ENCODE measurements at regions of chr16 and their contacts with region 1.

Region 1: GRCh38 chr16:30370444-30371247 is at the start of gene TBC1D10B:
- DNase-seq: peak; percentile 98 to 99
- H3K4me3 ChIP-seq: peak within 1 kb of the TSS; percentile 63
- H3K4me3 Mint-ChIP-seq: peak within 1 kb of the TSS; percentile 83
- H3K27ac Mint-ChIP-seq: peak within 1 kb of the TSS; percentile 99
- H3K4me1 ChIP-seq: peaks cover 21% of the 10 kb centered on the region
- H3K4me1 Mint-ChIP-seq: peaks cover 33% of the 10 kb centered on the region
- H3K27me3 ChIP-seq: no peaks in the 10 kb centered on the region
- H3K27me3 Mint-ChIP-seq: no peaks in the 10 kb centered on the region
- CTCF ChIP-seq: peak; percentile 17 to 40
- total RNA-seq, gene TBC1D10B: 36.9 and 40.5 TPM in 2 replicates

Region 2: GRCh38 chr16:30183233-30184095 is 187.2 kb before region 1 on chr16 and contains the start of gene CORO1A:
- CTCF ChIA-PET with region 1: no interaction called
- POLR2A ChIA-PET with region 1: no interaction called
- intact Hi-C with region 1: no loop called
- DNase-seq: peak; percentile 64 to 78
- H3K4me3 ChIP-seq: peak within 1 kb of the TSS; percentile 68
- H3K4me3 Mint-ChIP-seq: peak within 1 kb of the TSS; percentile 80
- H3K27ac Mint-ChIP-seq: no peak within 1 kb of the TSS
- H3K4me1 ChIP-seq: no peaks in the 10 kb centered on the region
- H3K4me1 Mint-ChIP-seq: no peaks in the 10 kb centered on the region
- H3K27me3 ChIP-seq: no peaks in the 10 kb centered on the region
- H3K27me3 Mint-ChIP-seq: no peaks in the 10 kb centered on the region
- CTCF ChIP-seq: no peak
- total RNA-seq, gene CORO1A: 0.95 and 1.2 TPM in 2 replicates

Region 3: DNA sequence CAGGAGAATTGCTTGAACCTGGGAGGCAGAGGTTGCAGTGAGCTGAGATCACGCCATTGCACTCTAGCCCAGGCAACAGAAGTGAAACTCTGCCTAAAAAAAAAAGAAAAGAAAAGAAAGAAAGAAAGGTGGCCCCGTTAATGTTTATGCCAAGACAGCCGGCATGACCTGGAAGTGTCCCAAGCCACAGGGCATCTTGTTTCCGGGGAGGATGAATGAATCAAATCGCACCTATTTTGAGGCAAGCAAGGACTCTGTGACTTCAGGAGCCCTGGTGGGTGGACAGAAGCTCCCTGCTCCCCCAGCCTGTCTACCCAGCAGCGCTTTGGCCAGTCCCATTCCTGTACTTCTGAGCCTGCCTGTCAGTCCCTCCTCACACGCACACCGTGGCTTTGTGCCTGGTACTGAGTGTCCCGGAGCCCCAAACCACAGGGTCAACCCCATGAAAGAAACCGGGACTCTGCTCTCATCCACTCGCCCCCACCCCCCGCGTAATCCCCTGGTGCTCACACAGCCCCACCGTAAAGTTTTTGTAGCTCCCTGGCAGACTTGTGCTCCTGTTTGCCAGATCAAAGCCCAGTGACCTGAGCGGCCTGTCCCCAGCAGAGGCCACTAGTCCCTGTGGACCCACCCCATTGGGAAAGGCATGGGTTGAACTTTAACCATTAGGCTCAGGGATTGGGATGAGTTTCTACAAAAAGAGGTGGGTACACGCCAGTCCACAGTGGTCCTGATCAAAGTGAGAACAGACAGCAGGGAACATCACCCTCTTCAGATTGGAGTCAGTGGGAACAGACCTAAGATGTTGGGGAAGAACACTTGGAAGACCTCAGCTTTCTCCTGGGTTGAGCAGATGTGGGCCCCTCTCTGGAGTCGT is 34.8 kb before region 1 on chr16:
- CTCF ChIA-PET with region 1: interaction called, 4 read pairs
- POLR2A ChIA-PET with region 1: interaction called, 15 read pairs
- intact Hi-C with region 1: no loop called
- DNase-seq: peak in 1 of 2 experiments; percentile 48
- H3K4me3 ChIP-seq: peak overlapping the region; percentile 46
- H3K4me3 Mint-ChIP-seq: peak overlapping the region; percentile 93
- H3K27ac Mint-ChIP-seq: peak overlapping the region; percentile 94
- H3K4me1 ChIP-seq: no peaks in the 10 kb centered on the region
- H3K4me1 Mint-ChIP-seq: peaks cover 8% of the 10 kb centered on the region
- H3K27me3 ChIP-seq: no peaks in the 10 kb centered on the region
- H3K27me3 Mint-ChIP-seq: no peaks in the 10 kb centered on the region
- CTCF ChIP-seq: peak in 1 of 2 experiments; percentile 26

Region 4: GRCh38 chr16:30355144-30355894 is 15.3 kb before region 1 on chr16 and contains the start of gene CD2BP2:
- CTCF ChIA-PET with region 1: interaction called, 5 read pairs
- POLR2A ChIA-PET with region 1: interaction called, 30 read pairs
- intact Hi-C with region 1: no loop called
- DNase-seq: peak; percentile 93 to 97
- H3K4me3 ChIP-seq: peak within 1 kb of the TSS; percentile 97
- H3K4me3 Mint-ChIP-seq: peak within 1 kb of the TSS; percentile 94
- H3K27ac Mint-ChIP-seq: peak within 1 kb of the TSS; percentile 99
- H3K4me1 ChIP-seq: peaks cover 5% of the 10 kb centered on the region; the same call in 1 of the 2 replicates
- H3K4me1 Mint-ChIP-seq: peaks cover 18% of the 10 kb centered on the region
- H3K27me3 ChIP-seq: no peaks in the 10 kb centered on the region
- H3K27me3 Mint-ChIP-seq: no peaks in the 10 kb centered on the region
- CTCF ChIP-seq: no peak
- total RNA-seq, gene CD2BP2: 50.1 and 51.8 TPM in 2 replicates

Region 5: GRCh38 chr16:30407102-30407803 is 36.6 kb after region 1 on chr16 and contains the start of gene ZNF771:
- CTCF ChIA-PET with region 1: interaction called, 18 read pairs
- POLR2A ChIA-PET with region 1: interaction called, 7 read pairs
- intact Hi-C with region 1: no loop called
- DNase-seq: peak; percentile 89 to 92
- H3K4me3 ChIP-seq: peak within 1 kb of the TSS; percentile 87
- H3K4me3 Mint-ChIP-seq: peak within 1 kb of the TSS; percentile 87
- H3K27ac Mint-ChIP-seq: peak within 1 kb of the TSS; percentile 94
- H3K4me1 ChIP-seq: peaks cover 15% of the 10 kb centered on the region
- H3K4me1 Mint-ChIP-seq: peaks cover 7% of the 10 kb centered on the region
- H3K27me3 ChIP-seq: no peaks in the 10 kb centered on the region
- H3K27me3 Mint-ChIP-seq: no peaks in the 10 kb centered on the region
- CTCF ChIP-seq: no peak
- total RNA-seq, gene ZNF771: 4.7 and 5.8 TPM in 2 replicates

Region 6: DNA sequence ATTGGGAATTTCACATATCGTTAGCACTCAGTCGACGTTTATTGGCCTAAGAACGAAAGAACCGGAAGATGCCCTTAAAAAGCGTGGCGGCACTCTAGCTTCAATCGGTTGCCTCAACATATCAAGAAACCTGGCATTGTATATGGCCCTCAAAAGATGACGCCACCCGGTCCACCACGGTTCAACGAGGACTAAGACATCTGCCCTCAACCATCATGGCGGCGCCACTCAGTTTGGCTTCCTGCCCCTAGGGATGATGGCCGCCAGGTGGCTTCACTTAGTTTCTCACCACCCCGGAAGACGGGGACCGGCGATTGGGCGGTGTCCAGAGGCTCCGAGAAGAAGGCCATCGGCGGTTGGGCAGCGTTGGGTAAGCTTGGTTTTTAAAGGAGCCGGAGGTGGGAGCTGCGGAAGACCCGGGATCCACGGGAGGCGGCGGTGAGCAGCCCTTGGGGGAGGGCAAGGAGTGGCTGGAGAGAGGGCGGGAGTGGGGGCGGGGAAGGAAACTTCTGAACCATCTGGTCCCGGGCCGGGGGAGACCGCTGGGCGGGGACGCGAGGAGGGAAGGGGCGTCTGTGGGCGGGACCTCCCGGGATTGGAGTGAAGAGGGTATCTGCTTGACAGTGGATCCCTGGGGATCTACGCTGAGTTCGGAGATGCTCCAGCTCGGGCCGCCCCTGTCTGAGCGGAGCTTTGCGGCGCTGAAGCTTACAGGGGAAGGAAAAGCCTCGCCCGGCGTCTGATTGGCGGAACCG is 279.9 kb after region 1 on chr16 and contains the start of gene PRR14:
- CTCF ChIA-PET with region 1: interaction called, 11 read pairs
- POLR2A ChIA-PET with region 1: no interaction called
- intact Hi-C with region 1: no loop called
- DNase-seq: peak; percentile 98 to 99
- H3K4me3 ChIP-seq: peak within 1 kb of the TSS; percentile 80
- H3K4me3 Mint-ChIP-seq: peak within 1 kb of the TSS; percentile 86
- H3K27ac Mint-ChIP-seq: peak within 1 kb of the TSS; percentile 78
- H3K4me1 ChIP-seq: peaks cover 3% of the 10 kb centered on the region; the same call in 1 of the 2 replicates
- H3K4me1 Mint-ChIP-seq: peaks cover 12% of the 10 kb centered on the region
- H3K27me3 ChIP-seq: no peaks in the 10 kb centered on the region
- H3K27me3 Mint-ChIP-seq: no peaks in the 10 kb centered on the region
- CTCF ChIP-seq: peak; percentile 1 to 36
- total RNA-seq, gene PRR14: 26.3 and 28.2 TPM in 2 replicates

Measured in Caco-2 (cell line).